HepG2 (cell line): ENCODE measurements at regions of chr2 and their contacts with region 1.

Region 1: GRCh38 chr2:167212014-167212648 is 323.9 kb downstream of the XIRP2 start:
- DNase-seq: peak; percentile 50
- ATAC-seq: peak; percentile 72
- H3K4me3 ChIP-seq: no peak overlapping the region
- H3K27ac ChIP-seq: no peak overlapping the region
- H3K4me1 ChIP-seq: no peaks in the 10 kb centered on the region
- H3K27me3 ChIP-seq: no peaks in the 10 kb centered on the region; a peak in 1 of 5 replicates
- CTCF ChIP-seq: peak; percentile 82
- EP300 ChIP-seq: no peak
- POLR2A ChIP-seq: no peak
- RAD21 ChIP-seq: peak; percentile 58; the same call in 1 of the 2 replicates

Region 2: DNA sequence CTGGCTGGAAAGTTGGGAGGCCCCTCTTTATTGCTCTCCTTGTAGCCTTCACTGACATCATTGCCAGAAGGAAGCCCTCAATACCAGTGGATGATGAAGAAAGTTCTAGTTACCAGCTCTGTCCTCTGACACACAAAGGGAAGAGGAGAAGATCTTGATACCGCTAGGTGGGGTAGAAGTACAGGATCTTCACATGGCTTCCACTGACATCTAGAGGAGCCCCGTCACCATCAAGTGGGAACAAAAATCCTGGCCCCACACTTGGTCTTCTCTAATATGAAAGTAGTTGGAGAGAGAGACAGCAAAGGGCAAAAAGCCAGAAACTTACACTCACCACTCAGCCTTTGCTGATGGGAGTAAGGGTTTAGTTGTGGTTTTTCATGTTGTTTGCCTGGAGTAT is 311.4 kb before region 1 on chr2:
- CTCF ChIA-PET with region 1: interaction called, 11 read pairs
- POLR2A ChIA-PET with region 1: no interaction called
- in situ Hi-C with region 1: loop called (anchors 5 kb)
- intact Hi-C with region 1: loop called (anchors 1 kb)
- DNase-seq: peak; percentile 67
- ATAC-seq: peak; percentile 99
- H3K4me3 ChIP-seq: no peak overlapping the region
- H3K27ac ChIP-seq: no peak overlapping the region
- H3K4me1 ChIP-seq: no peaks in the 10 kb centered on the region
- H3K27me3 ChIP-seq: no peaks in the 10 kb centered on the region
- CTCF ChIP-seq: peak; percentile 79
- EP300 ChIP-seq: no peak
- POLR2A ChIP-seq: no peak
- RAD21 ChIP-seq: peak; percentile 58; the same call in 1 of the 2 replicates

Region 3: DNA sequence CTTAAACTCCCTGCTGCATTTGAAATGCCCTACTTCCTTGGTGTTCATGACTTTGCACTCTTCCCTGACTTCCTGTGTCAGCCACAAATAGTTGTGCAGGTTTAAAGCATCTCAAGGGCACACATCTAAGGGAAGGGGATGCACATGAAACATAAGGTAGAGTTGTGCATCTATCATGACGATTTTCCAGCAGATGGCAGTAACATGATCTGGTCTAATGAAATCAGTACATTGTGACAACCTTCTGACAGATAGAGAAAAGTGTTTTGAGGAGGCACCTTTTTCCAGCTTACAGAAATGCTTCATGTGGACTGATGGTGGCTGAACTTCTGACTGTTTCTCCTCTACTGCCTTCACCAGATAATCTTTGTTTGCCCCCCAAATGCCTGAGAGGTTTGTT is 85.0 kb before region 1 on chr2:
- CTCF ChIA-PET with region 1: no interaction called
- POLR2A ChIA-PET with region 1: no interaction called
- in situ Hi-C with region 1: no loop called
- intact Hi-C with region 1: loop called (anchors 2 kb)
- DNase-seq: peak; percentile 33
- ATAC-seq: peak; percentile 76
- H3K4me3 ChIP-seq: no peak overlapping the region
- H3K27ac ChIP-seq: no peak overlapping the region
- H3K4me1 ChIP-seq: no peaks in the 10 kb centered on the region
- H3K27me3 ChIP-seq: no peaks in the 10 kb centered on the region
- CTCF ChIP-seq: peak; percentile 36
- EP300 ChIP-seq: no peak
- POLR2A ChIP-seq: no peak
- RAD21 ChIP-seq: no peak

Region 4: DNA sequence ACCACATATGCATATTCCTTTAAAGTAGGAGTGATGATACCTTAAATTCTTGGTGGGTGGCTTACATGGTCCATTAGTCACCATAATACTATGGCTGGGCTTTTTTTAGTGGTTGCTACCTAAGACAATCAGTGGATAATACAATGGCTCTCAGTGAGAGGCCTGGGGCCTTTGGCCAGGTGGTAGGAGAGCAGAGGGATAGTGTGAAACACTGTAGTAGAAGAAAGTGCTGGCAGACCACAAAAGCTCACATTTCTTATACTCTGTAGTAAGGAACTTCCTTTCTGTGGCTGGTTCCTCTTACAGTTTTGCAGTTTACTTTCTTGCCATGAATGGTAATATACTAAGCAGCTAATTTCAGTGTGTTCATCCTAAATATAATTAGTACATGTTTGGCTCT is 259.6 kb after region 1 on chr2:
- CTCF ChIA-PET with region 1: no interaction called
- POLR2A ChIA-PET with region 1: no interaction called
- in situ Hi-C with region 1: no loop called
- intact Hi-C with region 1: no loop called
- DNase-seq: no peak
- ATAC-seq: no peak
- H3K4me3 ChIP-seq: no peak overlapping the region
- H3K27ac ChIP-seq: no peak overlapping the region
- H3K4me1 ChIP-seq: no peaks in the 10 kb centered on the region
- H3K27me3 ChIP-seq: no peaks in the 10 kb centered on the region
- CTCF ChIP-seq: no peak
- EP300 ChIP-seq: no peak
- POLR2A ChIP-seq: no peak
- RAD21 ChIP-seq: no peak